ENCODE measurements at regions of chr11 and their contacts with region 1.

Region 1: DNA sequence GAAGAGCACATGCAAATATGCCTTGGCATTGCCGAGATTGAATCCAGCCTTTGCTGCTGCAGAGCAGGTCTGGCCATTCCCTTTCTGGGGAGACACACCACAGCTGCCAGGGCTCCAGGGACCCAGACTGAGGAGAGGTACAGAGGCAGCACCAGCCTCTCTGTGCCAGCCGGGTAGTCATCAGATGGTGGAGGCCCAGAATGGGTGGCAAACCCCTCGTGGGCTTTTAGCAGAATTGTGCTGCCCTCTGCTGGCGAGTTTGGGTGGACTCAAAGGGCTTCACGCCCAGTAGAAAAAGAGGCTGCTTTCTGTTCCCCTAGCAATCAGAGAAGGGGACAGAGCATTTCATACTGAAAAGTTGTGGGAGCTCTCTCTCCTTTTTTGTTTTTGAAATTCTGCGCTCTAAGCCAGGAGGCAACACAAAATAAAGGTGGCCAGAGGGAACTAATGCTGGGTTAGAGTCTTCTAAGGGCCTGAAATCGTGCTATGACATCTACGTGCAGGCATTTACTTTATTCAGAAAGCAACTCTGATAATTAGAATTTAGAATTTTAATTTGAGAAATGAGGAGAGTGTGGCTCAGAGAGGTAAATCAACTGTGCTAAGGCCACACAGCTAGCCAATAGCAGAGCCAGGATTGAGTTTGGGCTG is 158.8 kb upstream of the NAV2 start:
- DNase-seq: no peak
- H3K4me3 ChIP-seq: no peak overlapping the region
- H3K27me3 ChIP-seq: peaks cover 6% of the 10 kb centered on the region
- CTCF ChIP-seq: peak; percentile 83

Region 2: GRCh38 chr11:19187114-19187832 is 366.5 kb before region 1 on chr11:
- CTCF ChIA-PET with region 1: no interaction called
- POLR2A ChIA-PET with region 1: no interaction called
- DNase-seq: no peak
- H3K4me3 ChIP-seq: no peak overlapping the region
- H3K27me3 ChIP-seq: peaks cover 3% of the 10 kb centered on the region; the same call in 1 of the 2 replicates
- CTCF ChIP-seq: no peak

Region 3: GRCh38 chr11:19259487-19260345 is 294.1 kb before region 1 on chr11:
- CTCF ChIA-PET with region 1: interaction called, 25 read pairs
- POLR2A ChIA-PET with region 1: no interaction called
- DNase-seq: peak; percentile 2
- H3K4me3 ChIP-seq: no peak overlapping the region
- H3K27me3 ChIP-seq: peaks cover 8% of the 10 kb centered on the region
- CTCF ChIP-seq: peak; percentile 96

Region 4: GRCh38 chr11:19326499-19326898 is 227.3 kb before region 1 on chr11:
- CTCF ChIA-PET with region 1: interaction called, 225 read pairs
- POLR2A ChIA-PET with region 1: no interaction called
- DNase-seq: no peak
- H3K4me3 ChIP-seq: no peak overlapping the region
- H3K27me3 ChIP-seq: peaks cover 17% of the 10 kb centered on the region
- CTCF ChIP-seq: peak; percentile 41

Region 5: DNA sequence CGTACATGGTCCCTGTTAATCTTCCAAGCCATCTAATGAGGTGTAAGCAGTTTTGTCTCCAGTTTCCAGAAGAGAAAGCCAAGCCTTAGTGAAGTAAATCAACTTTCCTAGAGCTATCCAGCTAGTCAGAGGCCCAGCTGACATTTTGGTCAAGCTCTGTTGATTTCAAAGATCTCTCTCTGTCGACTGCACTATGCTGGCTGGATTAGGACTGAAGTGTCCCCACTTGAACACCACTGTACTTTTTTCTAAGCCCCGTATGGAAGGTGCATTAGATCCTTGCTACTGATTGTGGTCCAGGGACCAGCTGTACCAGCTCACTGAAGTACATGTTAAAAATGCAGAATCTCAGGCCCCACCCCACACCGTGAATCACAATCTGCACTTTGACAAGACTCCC is 17.7 kb before region 1 on chr11:
- CTCF ChIA-PET with region 1: no interaction called
- POLR2A ChIA-PET with region 1: no interaction called
- DNase-seq: no peak
- H3K4me3 ChIP-seq: no peak overlapping the region
- H3K27me3 ChIP-seq: peaks cover 4% of the 10 kb centered on the region
- CTCF ChIP-seq: no peak

Region 6: DNA sequence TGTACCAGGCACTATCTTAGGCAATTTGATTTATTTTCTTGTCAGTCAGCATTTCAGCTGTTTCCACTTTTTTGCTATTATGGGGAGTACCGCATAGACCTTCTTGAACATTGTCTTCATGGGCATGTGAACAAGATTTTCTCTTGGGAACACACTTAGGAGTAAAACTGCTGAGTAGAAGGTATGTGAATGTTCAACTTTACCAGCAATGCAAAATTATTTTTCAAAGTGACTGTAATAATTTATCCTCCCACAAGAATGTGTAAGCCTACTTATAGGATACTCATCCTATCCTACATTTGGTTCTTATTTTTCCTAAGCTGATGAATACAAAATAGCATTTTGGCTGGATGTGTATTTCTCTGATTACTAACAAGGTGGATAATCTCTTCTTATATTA is 26.8 kb after region 1 on chr11:
- CTCF ChIA-PET with region 1: no interaction called
- POLR2A ChIA-PET with region 1: no interaction called
- DNase-seq: no peak
- H3K4me3 ChIP-seq: no peak overlapping the region
- H3K27me3 ChIP-seq: no peaks in the 10 kb centered on the region
- CTCF ChIP-seq: no peak

Region 7: DNA sequence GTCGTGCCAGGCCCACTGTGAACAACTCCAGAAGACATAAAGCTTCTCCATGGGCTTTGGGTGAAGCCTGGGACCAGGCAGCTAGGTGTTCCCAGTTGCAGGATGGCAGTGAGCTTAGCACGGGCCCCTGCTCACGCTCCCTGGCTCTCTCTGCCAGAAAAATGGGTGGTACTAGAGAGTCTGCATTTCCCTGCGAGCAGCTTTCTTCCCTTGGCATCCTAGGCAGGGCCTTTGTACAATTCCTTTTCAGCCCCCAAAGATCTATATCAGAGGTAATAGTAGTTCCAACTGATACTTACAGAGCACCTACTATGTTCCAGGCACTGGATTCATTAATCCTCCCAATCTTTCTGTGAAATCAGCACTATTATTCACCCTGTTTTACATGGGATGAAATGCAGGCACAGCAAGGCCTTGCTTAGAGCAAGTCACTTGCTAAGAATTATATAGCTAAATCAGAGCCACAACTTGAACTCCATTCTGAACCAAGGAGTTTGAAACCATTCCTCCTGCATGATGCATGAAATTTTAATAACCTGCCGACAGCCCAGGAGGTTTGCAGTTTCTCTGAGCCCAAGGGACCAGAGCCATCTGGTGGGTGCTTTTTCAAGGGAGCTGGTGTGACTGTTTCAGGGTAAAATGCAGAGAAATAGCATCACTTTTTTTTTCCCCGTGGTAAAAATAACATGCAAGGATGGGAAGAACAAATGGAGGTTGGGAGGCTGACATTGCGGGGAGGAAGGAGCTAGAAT is 181.5 kb after region 1 on chr11:
- CTCF ChIA-PET with region 1: interaction called, 38 read pairs
- POLR2A ChIA-PET with region 1: no interaction called
- DNase-seq: peak; percentile 36
- H3K4me3 ChIP-seq: no peak overlapping the region
- H3K27me3 ChIP-seq: no peaks in the 10 kb centered on the region
- CTCF ChIP-seq: peak; percentile 66

Region 8: GRCh38 chr11:19751055-19751454 is 197.2 kb after region 1 on chr11:
- CTCF ChIA-PET with region 1: interaction called, 10 read pairs
- POLR2A ChIA-PET with region 1: no interaction called
- DNase-seq: no peak
- H3K4me3 ChIP-seq: no peak overlapping the region
- H3K27me3 ChIP-seq: no peaks in the 10 kb centered on the region
- CTCF ChIP-seq: no peak

Region 9: DNA sequence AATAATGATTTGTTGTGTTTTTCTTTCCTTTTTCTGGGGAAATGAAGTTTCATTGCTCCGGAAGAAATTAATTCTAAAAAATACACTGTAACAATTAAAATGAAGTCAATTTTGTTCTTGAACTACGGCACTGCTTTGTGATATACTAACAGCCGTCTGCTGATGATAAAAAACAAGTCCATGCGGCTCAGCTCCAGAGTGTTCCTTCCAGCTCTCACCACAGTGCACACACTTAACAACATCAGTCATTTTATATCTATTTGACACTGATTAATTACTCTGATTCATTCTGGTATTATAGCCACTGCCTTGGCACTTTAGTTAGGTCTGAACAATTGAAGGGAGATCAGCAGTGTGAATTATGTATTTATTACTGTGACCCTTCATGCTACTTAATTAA is 948.2 kb after region 1 on chr11:
- CTCF ChIA-PET with region 1: no interaction called
- POLR2A ChIA-PET with region 1: no interaction called
- DNase-seq: no peak
- H3K4me3 ChIP-seq: no peak overlapping the region
- H3K27me3 ChIP-seq: no peaks in the 10 kb centered on the region
- CTCF ChIP-seq: no peak

Measured in BJ (cell line).